ENCODE measurements at regions of chr6 and their contacts with region 1.

Region 1: DNA sequence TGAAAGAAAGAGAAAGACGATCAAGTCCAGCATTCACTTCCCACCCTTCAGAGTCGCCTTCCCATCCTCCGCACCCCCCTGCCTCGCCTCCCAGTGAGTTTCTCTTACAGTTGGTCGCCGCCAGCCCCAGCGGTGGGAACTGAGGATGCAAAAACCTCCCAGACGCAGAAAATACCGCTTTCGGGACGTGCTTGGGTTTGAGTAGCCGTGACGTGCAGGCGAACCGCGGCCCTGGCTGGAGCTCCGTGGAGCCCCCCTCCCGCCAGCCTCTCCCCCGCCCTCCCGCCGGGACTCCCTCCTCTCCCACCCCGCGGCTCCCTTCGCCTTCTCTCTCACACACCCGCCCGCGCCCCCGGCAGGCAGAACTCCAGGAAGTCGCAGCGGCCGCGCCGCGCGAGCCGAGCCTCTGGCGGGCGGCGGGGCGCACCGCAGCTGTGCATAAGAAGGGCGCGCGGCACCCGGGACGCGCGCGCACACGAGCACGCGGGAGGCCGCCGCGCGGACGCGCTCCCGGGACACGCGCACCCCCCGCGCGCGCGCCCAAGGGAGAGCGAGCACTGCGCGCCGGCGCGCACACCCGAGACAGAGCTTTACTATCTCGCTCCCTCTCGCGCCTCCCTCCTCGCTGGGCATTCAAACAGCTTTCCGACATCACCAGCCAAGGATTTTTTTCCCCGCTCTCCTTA is at the start of gene ADGRB3:
- DNase-seq: peak; percentile 80

Region 2: GRCh38 chr6:66772800-66773199 is 1862.1 kb before region 1 on chr6:
- CTCF ChIA-PET with region 1: no interaction called
- POLR2A ChIA-PET with region 1: no interaction called
- DNase-seq: no peak

Region 3: GRCh38 chr6:68559070-68559469 is 75.8 kb before region 1 on chr6:
- CTCF ChIA-PET with region 1: interaction called, 5 read pairs
- POLR2A ChIA-PET with region 1: interaction called, 25 read pairs
- DNase-seq: peak; percentile 38

Region 4: DNA sequence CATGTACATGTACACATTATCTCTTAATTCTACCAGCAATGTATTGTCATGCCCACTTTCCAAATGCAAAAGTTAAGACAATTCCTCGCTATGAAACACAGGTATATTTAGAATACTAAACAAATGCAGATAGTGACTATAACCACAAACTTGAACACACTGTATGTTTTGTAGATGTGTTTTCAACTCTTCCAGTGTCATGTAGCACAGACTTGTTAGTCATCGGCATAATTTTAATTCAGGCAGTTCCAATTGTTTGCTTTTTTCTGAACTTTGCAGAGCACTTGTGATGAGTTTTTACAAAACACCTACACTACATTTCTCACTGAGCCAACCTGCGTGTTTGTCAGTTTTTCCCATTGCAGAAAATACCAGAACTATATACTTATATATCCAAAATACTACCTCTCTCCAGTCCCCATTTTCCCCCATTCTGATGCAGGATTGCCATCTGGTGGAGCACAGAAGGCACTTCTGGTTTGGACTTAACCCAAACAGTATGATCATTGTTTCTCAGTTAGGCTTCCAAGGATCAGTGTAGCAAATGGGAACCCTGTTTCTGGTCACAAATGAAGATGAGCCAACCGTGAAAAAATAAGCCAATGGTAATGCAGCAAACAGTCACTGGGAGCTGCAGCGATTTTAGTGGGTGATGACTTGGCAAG is 143.6 kb after region 1 on chr6:
- CTCF ChIA-PET with region 1: interaction called, 14 read pairs
- POLR2A ChIA-PET with region 1: interaction called, 4 read pairs
- DNase-seq: peak; percentile 45

Region 5: GRCh38 chr6:68891419-68891818 is 256.6 kb after region 1 on chr6:
- CTCF ChIA-PET with region 1: no interaction called
- POLR2A ChIA-PET with region 1: no interaction called
- DNase-seq: no peak

Measured in HEK293T (cell line).